Activated CD4-positive, alpha-beta T cell treated with anti-CD3 and anti-CD28 coated beads for 36 hours (primary cell): ENCODE measurements at regions of chr3 and their contacts with region 1.

Region 1: GRCh38 chr3:36700537-36701248 is 63.7 kb downstream of the DCLK3 start:
- DNase-seq: peak; percentile 73
- ATAC-seq: peak; percentile 78
- H3K4me3 Mint-ChIP-seq: no peak overlapping the region
- H3K27ac Mint-ChIP-seq: no peak overlapping the region
- H3K4me1 Mint-ChIP-seq: no peaks in the 10 kb centered on the region
- H3K27me3 Mint-ChIP-seq: peaks cover 2% of the 10 kb centered on the region

Region 2: DNA sequence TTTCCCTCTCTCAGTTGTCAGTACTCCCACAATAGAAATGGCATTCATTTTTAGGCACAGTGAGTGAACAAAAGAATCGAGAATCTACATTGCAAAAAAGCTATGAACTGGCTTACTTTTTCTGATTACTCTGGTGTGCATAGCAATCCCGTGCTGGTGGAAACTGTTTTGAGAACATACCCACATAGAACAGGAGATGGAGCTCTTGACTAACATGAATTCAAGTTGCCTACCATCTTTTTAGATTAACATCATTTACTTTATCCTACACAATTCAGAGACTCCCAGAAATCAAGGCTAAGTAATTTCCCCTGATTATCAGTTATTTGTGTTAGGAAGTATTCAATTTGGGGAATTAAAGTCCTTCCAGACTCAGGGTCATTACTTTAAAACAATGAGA is 734.8 kb before region 1 on chr3:
- CTCF ChIA-PET with region 1: no interaction called
- POLR2A ChIA-PET with region 1: no interaction called
- intact Hi-C with region 1: loop called (anchors 1 to 5 kb)
- DNase-seq: no peak
- ATAC-seq: no peak
- H3K4me3 Mint-ChIP-seq: no peak overlapping the region
- H3K27ac Mint-ChIP-seq: no peak overlapping the region
- H3K4me1 Mint-ChIP-seq: peaks cover 2% of the 10 kb centered on the region
- H3K27me3 Mint-ChIP-seq: peaks cover 2% of the 10 kb centered on the region

Region 3: DNA sequence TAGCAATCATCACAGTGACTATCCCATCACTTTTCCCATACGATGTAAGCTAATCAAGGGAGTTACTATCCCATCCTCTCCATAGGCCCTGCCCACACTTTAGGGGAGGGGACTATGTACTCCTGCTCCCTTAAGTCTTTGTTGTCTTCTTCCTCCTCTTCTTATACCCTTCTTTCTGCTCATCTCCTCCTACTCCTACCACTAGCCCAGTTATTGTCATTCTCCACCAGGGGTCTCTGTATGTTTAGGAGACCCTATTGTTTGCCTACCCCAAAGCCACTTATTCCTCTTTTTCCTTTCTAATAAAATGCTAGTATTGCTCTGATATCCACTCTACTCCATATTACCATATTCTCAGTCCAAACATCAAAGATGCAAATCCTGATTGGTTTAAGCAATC is 292.5 kb before region 1 on chr3:
- CTCF ChIA-PET with region 1: no interaction called
- POLR2A ChIA-PET with region 1: no interaction called
- intact Hi-C with region 1: loop called (anchors 10 kb)
- DNase-seq: no peak
- ATAC-seq: no peak
- H3K4me3 Mint-ChIP-seq: no peak overlapping the region
- H3K27ac Mint-ChIP-seq: no peak overlapping the region
- H3K4me1 Mint-ChIP-seq: no peaks in the 10 kb centered on the region
- H3K27me3 Mint-ChIP-seq: no peaks in the 10 kb centered on the region

Region 4: GRCh38 chr3:36591959-36592358 is 108.7 kb before region 1 on chr3:
- CTCF ChIA-PET with region 1: no interaction called
- POLR2A ChIA-PET with region 1: no interaction called
- intact Hi-C with region 1: loop called in 1 of 2 experiments (anchors 5 kb)
- DNase-seq: no peak
- ATAC-seq: no peak
- H3K4me3 Mint-ChIP-seq: no peak overlapping the region
- H3K27ac Mint-ChIP-seq: no peak overlapping the region
- H3K4me1 Mint-ChIP-seq: no peaks in the 10 kb centered on the region
- H3K27me3 Mint-ChIP-seq: peaks cover 5% of the 10 kb centered on the region

Region 5: DNA sequence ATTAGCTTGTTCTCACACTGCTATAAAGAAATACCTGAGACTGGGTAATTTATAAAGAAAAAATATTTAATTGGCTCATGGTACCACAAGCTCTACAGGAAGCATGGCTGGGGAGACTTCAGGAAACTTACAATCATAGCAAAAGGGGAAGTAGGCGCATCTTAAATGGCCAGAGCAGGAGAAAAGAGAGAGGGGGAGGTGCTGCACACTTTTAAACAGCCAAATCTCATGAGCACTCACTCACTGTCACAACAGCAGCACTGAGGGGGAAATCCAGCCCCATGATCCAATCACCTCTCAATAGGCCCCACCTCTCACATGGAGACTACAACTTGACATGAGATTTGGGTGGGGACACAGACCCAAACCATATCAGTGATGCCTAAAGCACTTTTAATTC is 18.8 kb before region 1 on chr3:
- CTCF ChIA-PET with region 1: no interaction called
- POLR2A ChIA-PET with region 1: no interaction called
- intact Hi-C with region 1: no loop called
- DNase-seq: no peak
- ATAC-seq: no peak
- H3K4me3 Mint-ChIP-seq: no peak overlapping the region
- H3K27ac Mint-ChIP-seq: no peak overlapping the region
- H3K4me1 Mint-ChIP-seq: peaks cover 2% of the 10 kb centered on the region
- H3K27me3 Mint-ChIP-seq: peaks cover 15% of the 10 kb centered on the region